ENCODE measurements at regions of chr1 and their contacts with region 1.

Region 1: GRCh38 chr1:151534665-151535278 is 5.3 kb upstream of the TUFT1 start:
- DNase-seq: peak; percentile 63 to 70 (median 65)
- H3K4me3 ChIP-seq: no peak overlapping the region
- H3K4me3 Mint-ChIP-seq: no peak overlapping the region
- H3K27ac ChIP-seq: no peak overlapping the region
- H3K27ac Mint-ChIP-seq: peak overlapping the region in 1 of 7 donors; percentile 12
- H3K4me1 ChIP-seq: peaks cover 7% of the 10 kb centered on the region
- H3K4me1 Mint-ChIP-seq: peaks cover 0 to 6% (median 4%) of the 10 kb centered on the region in 4 donors
- H3K27me3 ChIP-seq: no peaks in the 10 kb centered on the region
- H3K27me3 Mint-ChIP-seq: peaks cover 2 to 3% of the 10 kb centered on the region in 2 donors

Region 2: DNA sequence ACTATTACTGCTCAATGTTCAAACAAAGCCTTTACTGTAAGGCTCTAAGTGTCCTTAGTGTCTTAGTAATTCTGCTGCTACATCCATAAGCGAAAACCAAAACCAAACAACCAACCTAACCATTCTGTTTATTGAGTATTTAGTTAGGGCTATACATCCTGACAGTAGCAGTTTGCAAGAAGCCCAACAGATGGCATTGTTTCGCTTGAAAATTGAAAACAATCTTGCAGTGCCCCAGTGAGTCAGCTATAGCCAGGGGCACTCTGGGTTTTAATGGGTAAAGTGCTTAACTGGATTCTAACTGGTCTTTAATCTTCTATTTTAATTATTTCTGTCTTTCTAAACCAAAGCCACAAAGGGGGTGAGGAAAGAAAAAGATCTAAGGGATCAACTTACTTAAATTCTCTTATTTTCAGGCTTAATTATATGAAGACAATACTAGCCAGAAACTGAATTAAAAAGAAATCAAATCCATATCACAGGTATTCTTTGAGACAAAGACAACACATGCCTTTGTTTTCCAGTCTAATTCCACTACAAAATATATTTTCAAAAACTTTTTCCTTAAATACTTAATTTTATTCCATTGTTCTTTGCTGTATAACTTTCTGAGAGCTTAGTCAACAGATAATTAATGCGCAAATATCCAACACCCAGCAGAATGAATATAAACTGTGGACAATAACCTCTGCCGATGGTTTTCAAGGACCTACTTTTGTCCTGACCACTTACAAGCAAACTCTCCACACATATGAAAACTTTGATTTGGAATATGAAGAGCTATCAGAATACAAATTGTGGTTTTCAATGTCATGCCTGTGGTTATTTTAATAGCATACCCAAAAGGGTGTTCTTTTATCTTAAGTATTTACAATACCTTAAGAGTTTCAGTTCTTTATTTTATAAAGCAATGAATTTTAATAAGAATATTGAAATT is 90.7 kb before region 1 on chr1:
- CTCF ChIA-PET with region 1: no interaction called
- POLR2A ChIA-PET with region 1: no interaction called
- intact Hi-C with region 1: loop called (anchors 1 kb)
- DNase-seq: peak; percentile 68 to 82 (median 68)
- H3K4me3 ChIP-seq: no peak overlapping the region
- H3K4me3 Mint-ChIP-seq: no peak overlapping the region
- H3K27ac ChIP-seq: no peak overlapping the region
- H3K27ac Mint-ChIP-seq: peak overlapping the region in 3 of 7 donors; percentile 41 to 79 (median 69)
- H3K4me1 ChIP-seq: peaks cover 50% of the 10 kb centered on the region
- H3K4me1 Mint-ChIP-seq: peaks cover 32 to 65% (median 50%) of the 10 kb centered on the region in 4 donors
- H3K27me3 ChIP-seq: no peaks in the 10 kb centered on the region
- H3K27me3 Mint-ChIP-seq: no peaks in the 10 kb centered on the region

Region 3: DNA sequence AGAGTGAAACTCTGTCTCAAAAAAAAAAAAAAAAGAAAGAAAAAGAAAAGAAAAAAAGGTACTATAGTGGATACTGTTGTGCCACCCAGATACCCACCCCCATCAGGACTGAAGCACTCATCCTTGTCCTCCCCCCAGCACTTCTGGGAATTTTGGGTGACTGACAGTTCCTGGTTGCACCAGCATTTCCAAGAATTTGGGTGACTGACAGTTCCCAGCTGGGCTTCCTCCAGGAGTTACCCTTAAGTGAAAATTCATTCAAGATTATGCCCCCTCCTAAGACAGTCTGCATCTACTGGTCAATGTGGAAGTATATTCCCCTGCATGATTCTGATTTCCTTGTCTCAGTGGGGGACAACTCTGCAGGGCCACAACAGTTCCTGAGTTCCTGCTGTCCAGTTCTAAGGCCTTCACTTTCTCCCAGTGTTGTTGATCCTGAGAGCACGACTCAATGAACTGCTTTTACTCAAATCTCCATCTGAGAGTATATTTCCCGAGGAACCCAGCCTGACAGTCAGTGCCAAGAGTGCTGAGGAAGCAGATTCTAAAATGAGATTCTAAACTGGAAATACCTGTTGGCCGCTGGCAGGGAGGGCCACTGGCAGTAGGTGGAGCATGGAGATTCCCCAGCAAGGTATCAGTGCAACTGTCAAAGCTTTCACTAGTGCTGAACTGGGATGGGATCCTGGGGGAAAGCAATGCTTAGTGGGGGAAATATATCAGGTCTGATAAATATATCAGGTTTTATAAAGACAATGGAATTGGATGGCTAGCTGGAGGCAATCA is 205.0 kb after region 1 on chr1:
- CTCF ChIA-PET with region 1: interaction called, 6 read pairs
- POLR2A ChIA-PET with region 1: no interaction called
- intact Hi-C with region 1: loop called (anchors 1 kb)
- DNase-seq: no peak
- H3K4me3 ChIP-seq: no peak overlapping the region
- H3K4me3 Mint-ChIP-seq: no peak overlapping the region
- H3K27ac ChIP-seq: no peak overlapping the region
- H3K27ac Mint-ChIP-seq: no peak overlapping the region
- H3K4me1 ChIP-seq: no peaks in the 10 kb centered on the region
- H3K4me1 Mint-ChIP-seq: no peaks in the 10 kb centered on the region
- H3K27me3 ChIP-seq: no peaks in the 10 kb centered on the region
- H3K27me3 Mint-ChIP-seq: no peaks in the 10 kb centered on the region

Measured in CD4-positive, alpha-beta memory T cell (primary cell).